CD4-positive, alpha-beta T cell (primary cell): ENCODE measurements at regions of chr14 and their contacts with region 1.

Region 1: DNA sequence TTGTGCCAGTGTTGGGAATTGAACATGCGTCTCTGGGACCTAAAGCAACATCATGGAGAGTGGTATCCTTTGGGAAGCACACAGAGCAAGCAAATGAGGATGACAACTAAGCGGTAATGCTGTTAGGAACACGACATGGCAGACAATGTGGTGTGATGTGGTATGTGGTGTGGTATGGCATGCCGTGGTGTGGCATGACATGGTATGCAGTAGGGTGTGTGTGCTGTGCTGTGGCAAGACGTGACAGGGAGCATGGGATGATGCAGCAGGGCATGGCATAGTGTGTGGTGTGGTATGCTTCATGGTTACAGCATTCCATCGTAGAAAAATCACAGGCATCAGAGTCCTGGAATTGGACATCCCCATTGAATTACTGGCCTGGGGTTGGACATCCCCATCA is 108.7 kb downstream of the RTN1 start:
- DNase-seq: no peak
- ATAC-seq: no peak
- H3K4me3 ChIP-seq: no peak overlapping the region
- H3K4me3 Mint-ChIP-seq: no peak overlapping the region
- H3K27ac ChIP-seq: no peak overlapping the region
- H3K27ac Mint-ChIP-seq: no peak overlapping the region
- H3K4me1 ChIP-seq: no peaks in the 10 kb centered on the region
- H3K4me1 Mint-ChIP-seq: no peaks in the 10 kb centered on the region
- H3K27me3 ChIP-seq: peaks cover 0 to 8% of the 10 kb centered on the region in 2 experiments
- H3K27me3 Mint-ChIP-seq: peaks cover 5% of the 10 kb centered on the region
- CTCF ChIP-seq: no peak

Region 2: DNA sequence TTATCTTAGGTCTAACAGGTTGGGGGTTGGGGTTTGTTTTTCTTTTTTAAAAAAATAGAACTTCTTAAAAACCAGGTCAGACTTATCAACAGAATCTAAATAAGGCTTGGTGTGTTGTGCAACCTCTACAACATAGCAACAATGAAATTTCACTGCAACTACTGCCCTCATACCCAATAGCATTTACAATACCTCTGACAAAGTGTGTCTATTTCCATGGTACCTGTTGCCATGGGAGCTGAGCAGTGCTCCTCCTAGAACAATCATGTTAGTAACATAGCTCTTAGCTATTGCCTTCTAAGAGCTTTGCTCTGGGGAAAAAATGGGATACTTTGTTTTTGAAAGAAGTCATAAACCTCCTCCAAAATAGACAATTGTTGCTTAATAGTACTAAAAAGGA is 82.0 kb before region 1 on chr14:
- CTCF ChIA-PET with region 1: no interaction called
- POLR2A ChIA-PET with region 1: no interaction called
- intact Hi-C with region 1: loop called in 1 of 2 experiments (anchors 5 kb)
- DNase-seq: no peak
- ATAC-seq: no peak
- H3K4me3 ChIP-seq: no peak overlapping the region
- H3K4me3 Mint-ChIP-seq: no peak overlapping the region
- H3K27ac ChIP-seq: no peak overlapping the region
- H3K27ac Mint-ChIP-seq: no peak overlapping the region
- H3K4me1 ChIP-seq: no peaks in the 10 kb centered on the region
- H3K4me1 Mint-ChIP-seq: no peaks in the 10 kb centered on the region
- H3K27me3 ChIP-seq: peaks cover 0 to 6% of the 10 kb centered on the region in 2 experiments
- H3K27me3 Mint-ChIP-seq: peaks cover 13% of the 10 kb centered on the region
- CTCF ChIP-seq: no peak

Region 3: GRCh38 chr14:59728321-59728720 is 33.5 kb before region 1 on chr14:
- CTCF ChIA-PET with region 1: no interaction called
- POLR2A ChIA-PET with region 1: no interaction called
- intact Hi-C with region 1: no loop called
- DNase-seq: no peak
- ATAC-seq: no peak
- H3K4me3 ChIP-seq: no peak overlapping the region
- H3K4me3 Mint-ChIP-seq: no peak overlapping the region
- H3K27ac ChIP-seq: no peak overlapping the region
- H3K27ac Mint-ChIP-seq: no peak overlapping the region
- H3K4me1 ChIP-seq: no peaks in the 10 kb centered on the region
- H3K4me1 Mint-ChIP-seq: no peaks in the 10 kb centered on the region
- H3K27me3 ChIP-seq: no peaks in the 10 kb centered on the region
- H3K27me3 Mint-ChIP-seq: peaks cover 6% of the 10 kb centered on the region
- CTCF ChIP-seq: no peak

Region 4: GRCh38 chr14:59803052-59803540 is 41.2 kb after region 1 on chr14:
- CTCF ChIA-PET with region 1: no interaction called
- POLR2A ChIA-PET with region 1: no interaction called
- intact Hi-C with region 1: no loop called
- DNase-seq: no peak
- ATAC-seq: no peak
- H3K4me3 ChIP-seq: no peak overlapping the region
- H3K4me3 Mint-ChIP-seq: no peak overlapping the region
- H3K27ac ChIP-seq: no peak overlapping the region
- H3K27ac Mint-ChIP-seq: no peak overlapping the region
- H3K4me1 ChIP-seq: no peaks in the 10 kb centered on the region
- H3K4me1 Mint-ChIP-seq: no peaks in the 10 kb centered on the region
- H3K27me3 ChIP-seq: no peaks in the 10 kb centered on the region
- H3K27me3 Mint-ChIP-seq: peaks cover 21% of the 10 kb centered on the region
- CTCF ChIP-seq: no peak